ENCODE measurements at regions of chr6 and their contacts with region 1.

Region 1: GRCh38 chr6:43174263-43175112 is 3.4 kb downstream of the SRF start:
- DNase-seq: peak; percentile 98 to 99
- H3K4me3 ChIP-seq: peak overlapping the region; percentile 88 to 95
- H3K27ac ChIP-seq: peak overlapping the region; percentile 98
- H3K4me1 ChIP-seq: peaks cover 8 to 30% of the 10 kb centered on the region in 2 donors
- H3K27me3 ChIP-seq: no peaks in the 10 kb centered on the region
- CTCF ChIP-seq: peak in 1 of 3 experiments; percentile 16

Region 2: DNA sequence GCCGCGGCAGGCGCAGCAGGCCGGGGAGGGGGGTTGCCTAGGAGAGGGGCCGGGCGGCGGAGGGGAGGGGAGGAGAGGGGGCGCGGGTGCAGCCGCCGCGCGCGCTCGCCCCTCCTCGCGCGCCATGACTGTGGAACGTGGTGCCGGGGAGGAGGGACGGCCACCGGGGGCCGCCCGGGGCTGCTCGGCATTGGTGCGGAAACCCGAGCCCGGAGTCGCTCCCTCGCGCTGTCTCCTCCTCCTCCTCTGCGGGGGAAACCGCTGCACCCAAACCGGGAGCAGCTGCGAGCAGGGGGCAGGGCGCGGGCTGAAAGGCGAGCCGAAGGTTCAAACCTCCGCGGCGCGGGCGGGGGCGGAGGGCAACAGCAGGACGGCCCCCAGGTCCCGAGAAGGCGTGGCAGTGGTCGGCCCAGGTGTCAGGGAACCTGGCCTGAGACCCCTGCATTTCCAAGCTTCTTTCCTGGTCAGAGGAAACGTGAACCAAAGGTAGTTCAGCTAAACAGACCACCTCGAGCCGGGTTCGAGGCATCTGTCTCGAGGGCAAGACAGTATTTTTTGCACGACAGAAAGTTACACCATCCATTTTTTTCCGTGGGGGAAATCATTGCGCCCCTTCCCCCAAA is 721.3 kb before region 1 on chr6:
- intact Hi-C with region 1: loop called (anchors 5 kb)
- DNase-seq: peak in 1 of 2 donors; percentile 93
- H3K4me3 ChIP-seq: peak overlapping the region; percentile 89 to 98
- H3K27ac ChIP-seq: peak overlapping the region; percentile 82 to 84
- H3K4me1 ChIP-seq: peaks cover 0 to 3% of the 10 kb centered on the region in 2 donors
- H3K27me3 ChIP-seq: no peaks in the 10 kb centered on the region
- CTCF ChIP-seq: no peak

Region 3: GRCh38 chr6:42782622-42783176 is 391.8 kb before region 1 on chr6:
- intact Hi-C with region 1: loop called (anchors 5 kb)
- DNase-seq: peak; percentile 35 to 90
- H3K4me3 ChIP-seq: peak overlapping the region; percentile 97 to 99
- H3K27ac ChIP-seq: peak overlapping the region; percentile 99 to 100
- H3K4me1 ChIP-seq: peaks cover 4 to 29% of the 10 kb centered on the region in 2 donors
- H3K27me3 ChIP-seq: no peaks in the 10 kb centered on the region
- CTCF ChIP-seq: peak in 1 of 3 experiments; percentile 2

Region 4: GRCh38 chr6:43143235-43144124 is 31.0 kb before region 1 on chr6:
- intact Hi-C with region 1: no loop called
- DNase-seq: peak; percentile 29 to 93
- H3K4me3 ChIP-seq: no peak overlapping the region
- H3K27ac ChIP-seq: peak overlapping the region in 1 of 2 donors; percentile 9
- H3K4me1 ChIP-seq: peaks cover 0 to 3% of the 10 kb centered on the region in 2 donors
- H3K27me3 ChIP-seq: no peaks in the 10 kb centered on the region
- CTCF ChIP-seq: peak; percentile 94 to 97 (median 95)

Region 5: DNA sequence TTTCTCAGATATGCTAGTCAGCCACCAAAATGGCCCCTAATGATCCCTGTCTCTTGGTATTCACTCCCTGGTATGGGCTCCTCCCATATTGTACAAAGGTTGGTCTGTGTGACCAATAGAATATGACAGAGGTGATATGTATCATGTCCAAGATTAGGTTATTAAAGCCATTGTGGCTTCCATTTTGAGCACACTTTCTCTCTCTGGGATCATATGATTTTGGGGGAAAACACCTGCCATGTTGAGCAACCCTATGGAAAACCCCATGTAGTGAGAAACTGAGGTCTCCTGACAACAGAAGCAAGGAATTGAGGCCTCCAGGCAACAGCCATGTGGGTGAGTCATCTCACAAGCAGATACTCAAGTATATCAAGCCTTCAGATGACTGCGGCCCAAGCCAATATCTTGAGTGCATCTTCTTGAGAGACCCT is 202.1 kb after region 1 on chr6:
- intact Hi-C with region 1: no loop called
- DNase-seq: no peak
- H3K4me3 ChIP-seq: no peak overlapping the region
- H3K27ac ChIP-seq: no peak overlapping the region
- H3K4me1 ChIP-seq: no peaks in the 10 kb centered on the region
- H3K27me3 ChIP-seq: no peaks in the 10 kb centered on the region
- CTCF ChIP-seq: no peak

Region 6: GRCh38 chr6:43541774-43542471 is 367.4 kb after region 1 on chr6:
- intact Hi-C with region 1: no loop called
- DNase-seq: no peak
- H3K4me3 ChIP-seq: no peak overlapping the region
- H3K27ac ChIP-seq: no peak overlapping the region
- H3K4me1 ChIP-seq: no peaks in the 10 kb centered on the region
- H3K27me3 ChIP-seq: no peaks in the 10 kb centered on the region
- CTCF ChIP-seq: no peak

Region 7: GRCh38 chr6:44246663-44247337 is 1072.3 kb after region 1 on chr6 and contains the start of gene HSP90AB1:
- intact Hi-C with region 1: loop called (anchors 5 kb)
- DNase-seq: peak; percentile 96 to 99
- H3K4me3 ChIP-seq: peak within 1 kb of the TSS; percentile 92 to 99
- H3K27ac ChIP-seq: peak within 1 kb of the TSS; percentile 99 to 100
- H3K4me1 ChIP-seq: peaks cover 0 to 30% of the 10 kb centered on the region in 2 donors
- H3K27me3 ChIP-seq: no peaks in the 10 kb centered on the region
- CTCF ChIP-seq: peak in 1 of 3 experiments; percentile 9
- total RNA-seq, gene HSP90AB1: 354 TPM

Measured in ascending aorta (tissue), 2 donors.